IMR-90 (cell line): ENCODE measurements at regions of chr5 and their contacts with region 1.

Region 1: DNA sequence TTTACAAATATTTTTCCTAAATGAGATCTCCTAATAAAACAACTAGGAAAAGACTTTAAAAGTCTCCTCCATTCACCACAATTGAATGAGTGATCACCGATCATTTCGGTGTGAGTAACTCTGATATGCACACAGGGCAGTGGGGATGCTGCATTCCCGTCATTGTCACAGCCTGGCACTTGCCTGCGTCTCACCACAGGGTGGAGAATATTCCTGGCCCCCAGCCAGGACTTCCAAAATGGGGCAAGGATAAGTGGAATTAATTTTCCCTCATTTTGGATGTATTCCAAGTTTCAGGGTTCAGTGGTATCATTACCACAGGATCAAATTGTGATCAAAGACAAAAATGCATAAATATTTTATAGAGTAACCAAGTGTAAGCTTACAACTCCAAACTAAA is 107.1 kb downstream of the CTNND2 start:
- DNase-seq: no peak
- ATAC-seq: no peak
- H3K4me3 ChIP-seq: no peak overlapping the region
- H3K27ac ChIP-seq: no peak overlapping the region
- H3K4me1 ChIP-seq: no peaks in the 10 kb centered on the region
- H3K27me3 ChIP-seq: no peaks in the 10 kb centered on the region
- CTCF ChIP-seq: no peak
- POLR2A ChIP-seq: no peak
- RAD21 ChIP-seq: no peak

Region 2: GRCh38 chr5:11452852-11453251 is 344.3 kb before region 1 on chr5:
- CTCF ChIA-PET with region 1: no interaction called
- POLR2A ChIA-PET with region 1: no interaction called
- dilution Hi-C with region 1: no loop called
- in situ Hi-C with region 1: no loop called
- intact Hi-C with region 1: loop called (anchors 10 kb)
- DNase-seq: no peak
- ATAC-seq: no peak
- H3K4me3 ChIP-seq: no peak overlapping the region
- H3K27ac ChIP-seq: no peak overlapping the region
- H3K4me1 ChIP-seq: no peaks in the 10 kb centered on the region
- H3K27me3 ChIP-seq: no peaks in the 10 kb centered on the region
- CTCF ChIP-seq: no peak
- POLR2A ChIP-seq: no peak
- RAD21 ChIP-seq: no peak

Region 3: DNA sequence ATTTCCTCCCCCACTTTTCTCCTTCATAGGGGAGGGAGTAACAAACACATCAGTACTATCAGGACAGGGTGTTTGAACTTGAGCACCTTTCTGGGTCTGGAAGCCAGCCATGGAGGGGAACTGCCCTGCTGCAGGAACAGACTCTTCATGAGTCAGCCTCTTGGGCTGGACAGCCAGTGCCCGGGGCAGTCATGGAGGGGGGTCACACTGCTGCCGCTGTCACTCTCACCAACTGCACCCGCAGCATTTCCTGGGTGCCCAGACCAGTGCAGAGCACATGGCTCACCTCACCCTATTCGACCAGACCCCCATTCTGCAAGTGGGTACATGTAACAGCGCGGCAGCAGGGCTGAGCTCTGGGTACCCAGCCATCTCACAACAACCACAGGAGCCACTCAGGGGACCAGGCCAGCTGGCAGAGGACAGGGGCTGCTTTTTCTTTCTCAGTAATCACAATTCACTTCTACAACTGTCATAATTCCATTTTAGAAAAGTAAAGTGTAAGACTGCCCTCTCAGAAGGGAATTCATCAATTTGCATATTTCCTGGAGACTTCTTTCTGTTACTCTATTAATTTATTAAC is 11.3 kb before region 1 on chr5:
- CTCF ChIA-PET with region 1: no interaction called
- POLR2A ChIA-PET with region 1: no interaction called
- dilution Hi-C with region 1: no loop called
- in situ Hi-C with region 1: no loop called
- intact Hi-C with region 1: no loop called
- DNase-seq: no peak
- ATAC-seq: no peak
- H3K4me3 ChIP-seq: no peak overlapping the region
- H3K27ac ChIP-seq: no peak overlapping the region
- H3K4me1 ChIP-seq: no peaks in the 10 kb centered on the region
- H3K27me3 ChIP-seq: no peaks in the 10 kb centered on the region
- CTCF ChIP-seq: no peak
- POLR2A ChIP-seq: no peak
- RAD21 ChIP-seq: no peak